Cardiac septum (tissue), 1 donor: ENCODE measurements at regions of chr4 and their contacts with region 1.

Region 1: DNA sequence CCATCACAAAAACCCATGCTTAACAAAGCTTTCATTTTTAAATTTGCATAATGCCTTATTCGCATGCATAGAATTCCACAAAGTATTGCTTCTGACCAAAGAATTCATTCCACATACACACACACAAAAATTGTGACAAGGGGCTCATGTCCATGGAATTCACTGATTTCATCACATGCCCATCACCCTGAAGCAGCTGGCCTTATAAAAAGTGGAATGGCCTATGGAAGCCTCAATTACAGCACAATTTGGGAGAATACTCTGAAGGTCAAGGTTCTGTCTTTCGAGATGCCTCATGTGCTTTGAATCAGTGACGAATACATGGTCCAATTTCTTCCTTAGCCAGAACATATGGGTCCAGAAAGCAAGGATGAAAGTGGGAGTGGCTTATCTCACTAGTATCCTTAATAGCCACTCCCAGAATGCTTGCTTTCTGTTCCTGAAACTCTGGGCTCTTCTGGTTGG is 165.7 kb downstream of the KDR start:
- DNase-seq: no peak

Region 2: GRCh38 chr4:54322818-54323417 is 636.8 kb before region 1 on chr4:
- intact Hi-C with region 1: loop called (anchors 2 kb)
- DNase-seq: no peak

Region 3: GRCh38 chr4:54539500-54540029 is 420.1 kb before region 1 on chr4:
- intact Hi-C with region 1: loop called (anchors 10 kb)
- DNase-seq: no peak